ENCODE measurements at regions of chr17 and their contacts with region 1.

Region 1: GRCh38 chr17:3647769-3648555 is 11.4 kb downstream of the CTNS start:
- DNase-seq: peak; percentile 58 to 77 (median 76)
- H3K4me3 ChIP-seq: no peak overlapping the region
- H3K27ac ChIP-seq: no peak overlapping the region
- H3K4me1 ChIP-seq: peaks cover 0 to 3% (median 0%) of the 10 kb centered on the region in 4 experiments
- H3K27me3 ChIP-seq: no peaks in the 10 kb centered on the region

Region 2: GRCh38 chr17:3043737-3044365 is 604.1 kb before region 1 on chr17:
- CTCF ChIA-PET with region 1: interaction called, 11 read pairs
- POLR2A ChIA-PET with region 1: no interaction called
- DNase-seq: peak in 1 of 3 donors; percentile 17
- H3K4me3 ChIP-seq: no peak overlapping the region
- H3K27ac ChIP-seq: no peak overlapping the region
- H3K4me1 ChIP-seq: peaks cover 2 to 18% (median 7%) of the 10 kb centered on the region in 4 experiments
- H3K27me3 ChIP-seq: no peaks in the 10 kb centered on the region

Measured in common myeloid progenitor, CD34-positive (primary cell).